Right cardiac atrium (tissue), 5 donors: ENCODE measurements at regions of chr3 and their contacts with region 1.

Region 1: GRCh38 chr3:50350527-50351322 is at the starts of genes CYB561D2 and NPRL2:
- DNase-seq: peak; percentile 98 to 99 (median 99)
- ATAC-seq: peak; percentile 94
- H3K4me3 ChIP-seq: peak within 1 kb of the TSS; percentile 65
- H3K27ac ChIP-seq: peak within 1 kb of the TSS; percentile 94
- H3K4me1 ChIP-seq: peaks cover 12% of the 10 kb centered on the region
- H3K27me3 ChIP-seq: no peaks in the 10 kb centered on the region
- total RNA-seq, gene CYB561D2: 8.5 to 11.1 (median 10.4) TPM
- total RNA-seq, gene NPRL2: 18.4 to 24.3 (median 19.3) TPM

Region 2: GRCh38 chr3:50100956-50101845 is 249.5 kb before region 1 on chr3:
- intact Hi-C with region 1: no loop called
- DNase-seq: no peak
- ATAC-seq: peak; percentile 59 to 72
- H3K4me3 ChIP-seq: no peak overlapping the region
- H3K27ac ChIP-seq: no peak overlapping the region
- H3K4me1 ChIP-seq: peaks cover 2% of the 10 kb centered on the region
- H3K27me3 ChIP-seq: no peaks in the 10 kb centered on the region

Region 3: GRCh38 chr3:50542177-50543034 is 191.7 kb after region 1 on chr3:
- intact Hi-C with region 1: loop called in 3 of 4 experiments (anchors 2 to 5 kb)
- DNase-seq: peak; percentile 54 to 84 (median 79)
- ATAC-seq: peak; percentile 61 to 73
- H3K4me3 ChIP-seq: no peak overlapping the region
- H3K27ac ChIP-seq: no peak overlapping the region
- H3K4me1 ChIP-seq: no peaks in the 10 kb centered on the region
- H3K27me3 ChIP-seq: no peaks in the 10 kb centered on the region

Region 4: DNA sequence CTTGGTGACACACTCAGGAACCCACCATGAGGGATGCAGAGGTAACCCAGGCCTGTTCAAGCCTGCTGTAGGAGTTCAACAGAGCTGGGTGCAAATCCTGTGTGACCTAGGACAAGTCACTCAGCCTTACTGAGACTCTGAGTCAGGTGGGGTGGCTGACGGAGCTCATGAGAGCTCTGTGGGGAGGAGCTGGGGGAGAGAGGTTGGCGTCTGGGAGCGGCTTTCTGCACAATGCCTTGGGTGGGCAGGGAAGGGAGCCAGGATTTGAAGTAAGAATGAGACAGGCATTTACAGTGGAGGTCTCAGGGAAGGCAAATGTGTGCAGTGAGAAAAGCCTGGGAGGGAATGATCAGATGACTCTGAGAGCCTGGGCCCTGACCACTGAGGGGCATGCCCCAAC is 198.5 kb after region 1 on chr3:
- intact Hi-C with region 1: loop called in 3 of 4 experiments (anchors 2 to 5 kb)
- DNase-seq: no peak
- ATAC-seq: no peak
- H3K4me3 ChIP-seq: no peak overlapping the region
- H3K27ac ChIP-seq: no peak overlapping the region
- H3K4me1 ChIP-seq: no peaks in the 10 kb centered on the region
- H3K27me3 ChIP-seq: no peaks in the 10 kb centered on the region

Region 5: DNA sequence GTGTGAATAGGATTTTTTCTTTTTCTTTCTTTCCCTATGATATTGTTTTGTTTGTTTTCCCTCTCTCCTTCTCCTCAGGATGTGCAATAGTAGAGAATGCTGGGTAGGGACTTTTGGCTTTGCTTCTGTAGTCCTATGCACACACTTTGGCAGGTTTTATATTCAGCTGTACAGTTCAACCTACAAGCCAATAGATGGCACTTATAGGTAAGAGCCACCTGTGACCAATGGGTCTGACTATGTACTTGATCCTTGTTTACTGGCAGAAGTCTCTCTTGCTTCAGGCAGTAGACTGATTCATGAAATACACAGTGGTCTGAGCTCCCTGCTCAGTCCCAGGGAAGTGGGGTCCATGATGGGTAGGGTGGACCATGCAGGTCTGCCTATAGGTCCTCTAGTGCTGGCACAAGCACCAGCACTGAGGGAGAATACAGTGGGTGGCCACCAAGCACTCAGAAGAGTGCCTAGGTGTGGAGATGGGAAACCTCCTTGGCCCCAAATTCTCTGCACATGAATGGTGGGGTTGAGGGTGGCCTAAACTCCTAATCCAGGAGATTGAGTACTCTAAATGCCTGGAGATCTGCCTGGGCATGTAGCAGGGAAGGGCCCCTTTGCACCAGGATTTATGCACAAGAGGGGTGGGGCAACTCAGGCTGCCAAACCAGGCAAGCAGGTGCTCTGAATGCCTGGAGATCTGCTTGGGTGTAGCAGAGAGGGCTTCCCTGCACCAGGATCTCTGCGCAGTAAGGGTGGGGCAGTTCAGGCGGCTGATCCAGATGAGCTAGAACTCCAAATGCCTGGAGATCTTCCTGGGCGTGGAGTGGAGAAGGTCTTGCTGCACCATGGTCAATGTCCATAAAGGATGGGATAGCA is 500.1 kb after region 1 on chr3:
- intact Hi-C with region 1: no loop called
- DNase-seq: no peak
- ATAC-seq: no peak
- H3K4me3 ChIP-seq: no peak overlapping the region
- H3K27ac ChIP-seq: no peak overlapping the region
- H3K4me1 ChIP-seq: no peaks in the 10 kb centered on the region
- H3K27me3 ChIP-seq: no peaks in the 10 kb centered on the region